Panc1 (cell line): ENCODE measurements at regions of chr10 and their contacts with region 1.

Region 1: DNA sequence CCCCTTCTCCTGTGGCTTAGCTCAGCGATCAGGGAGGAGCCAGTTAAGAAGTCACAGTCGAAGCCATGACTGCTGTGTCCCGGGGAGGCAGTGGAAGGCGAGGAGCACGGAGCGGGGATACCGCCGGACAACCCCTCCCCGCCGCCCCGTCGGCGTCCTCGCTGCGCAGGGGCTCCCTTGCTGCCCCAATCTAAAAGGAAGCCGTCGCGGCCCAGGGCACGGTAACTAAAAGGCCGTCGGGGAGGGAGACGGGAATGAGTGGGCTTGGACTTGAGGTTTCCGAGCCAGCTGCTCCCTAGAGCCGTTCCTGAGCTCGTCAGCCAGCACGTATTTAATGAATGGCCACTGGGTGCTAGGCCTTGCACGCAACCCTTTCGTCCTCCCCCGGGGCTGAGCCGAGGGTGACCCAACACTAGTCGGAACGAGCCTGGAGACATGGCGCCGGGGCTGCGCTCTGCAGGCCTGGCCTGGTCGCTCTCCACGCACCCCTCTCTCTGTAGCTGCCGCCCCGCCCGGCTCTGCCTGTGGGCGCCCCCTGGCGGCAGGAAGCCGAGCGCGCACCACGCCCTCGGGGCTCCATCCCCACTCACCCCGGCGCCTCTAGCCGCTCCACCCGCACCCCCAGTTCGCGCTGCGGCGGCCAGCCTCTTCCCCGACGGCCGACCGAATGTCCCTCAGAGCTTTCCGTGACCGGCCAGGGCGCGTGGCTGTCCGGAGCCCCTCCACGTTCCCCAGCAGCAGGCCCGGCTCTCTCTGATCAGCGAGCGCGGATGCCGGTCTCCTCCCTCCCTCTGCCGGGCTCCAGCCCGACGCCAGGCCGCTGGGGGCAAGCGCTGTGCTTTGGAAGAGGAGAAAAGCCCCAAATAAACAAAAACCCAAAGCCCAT is 29.3 kb upstream of the KCNK18 start:
- DNase-seq: no peak
- ATAC-seq: peak; percentile 90
- H3K4me3 ChIP-seq: peak overlapping the region; percentile 41 to 49
- H3K27ac ChIP-seq: no peak overlapping the region
- H3K4me1 ChIP-seq: no peaks in the 10 kb centered on the region
- H3K27me3 ChIP-seq: peaks cover 38% of the 10 kb centered on the region
- CTCF ChIP-seq: peak; percentile 99

Region 2: DNA sequence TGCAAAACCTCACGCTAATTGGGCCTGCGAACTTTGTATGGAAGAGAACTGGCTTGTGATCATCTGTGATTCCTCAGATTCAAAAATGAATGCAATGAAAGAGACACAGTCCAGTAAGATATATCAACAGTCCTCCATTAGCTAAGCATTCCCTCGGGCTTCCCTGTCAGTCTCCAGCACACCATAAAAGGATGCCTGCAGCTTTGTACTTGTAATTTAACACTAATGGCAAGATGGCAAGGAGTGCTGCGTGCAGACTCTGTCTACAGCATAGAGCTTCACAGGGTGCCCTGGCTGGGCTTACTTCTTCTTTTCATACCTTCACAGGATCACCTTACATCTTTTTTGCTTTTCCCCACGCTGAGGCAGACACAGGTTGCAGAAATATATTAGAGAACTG is 1095.0 kb before region 1 on chr10:
- CTCF ChIA-PET with region 1: no interaction called
- POLR2A ChIA-PET with region 1: no interaction called
- in situ Hi-C with region 1: no loop called
- intact Hi-C with region 1: no loop called
- DNase-seq: no peak
- ATAC-seq: no peak
- H3K4me3 ChIP-seq: no peak overlapping the region
- H3K27ac ChIP-seq: no peak overlapping the region
- H3K4me1 ChIP-seq: no peaks in the 10 kb centered on the region
- H3K27me3 ChIP-seq: no peaks in the 10 kb centered on the region
- CTCF ChIP-seq: no peak

Region 3: GRCh38 chr10:116796910-116797513 is 371.0 kb before region 1 on chr10:
- CTCF ChIA-PET with region 1: interaction called, 28 read pairs
- POLR2A ChIA-PET with region 1: interaction called, 3 read pairs
- in situ Hi-C with region 1: no loop called
- intact Hi-C with region 1: no loop called
- DNase-seq: peak; percentile 38
- ATAC-seq: peak; percentile 98
- H3K4me3 ChIP-seq: no peak overlapping the region
- H3K27ac ChIP-seq: no peak overlapping the region
- H3K4me1 ChIP-seq: no peaks in the 10 kb centered on the region
- H3K27me3 ChIP-seq: no peaks in the 10 kb centered on the region; the same call in 1 of the 2 replicates
- CTCF ChIP-seq: peak; percentile 96

Region 4: DNA sequence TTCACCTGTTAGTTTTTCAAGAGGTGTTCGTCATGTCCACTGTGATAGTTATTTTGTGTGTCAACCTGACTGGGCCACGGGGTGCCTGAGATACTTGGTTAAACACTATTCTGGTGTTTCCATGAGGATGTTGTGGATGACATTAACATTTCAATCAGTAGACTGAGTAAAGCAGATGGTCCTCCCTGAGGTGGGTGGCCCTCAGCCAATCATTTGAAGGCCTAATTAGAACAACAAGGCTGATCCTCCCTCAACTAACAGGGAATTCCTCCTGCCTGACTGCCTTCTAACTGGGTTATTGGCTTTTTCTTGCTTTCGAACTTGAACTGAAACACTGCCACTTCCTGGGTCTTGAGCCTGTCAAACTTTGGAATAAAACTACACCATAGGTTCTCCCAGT is 243.0 kb before region 1 on chr10:
- CTCF ChIA-PET with region 1: no interaction called
- POLR2A ChIA-PET with region 1: no interaction called
- in situ Hi-C with region 1: no loop called
- intact Hi-C with region 1: loop called (anchors 10 kb)
- DNase-seq: no peak
- ATAC-seq: no peak
- H3K4me3 ChIP-seq: no peak overlapping the region
- H3K27ac ChIP-seq: no peak overlapping the region
- H3K4me1 ChIP-seq: no peaks in the 10 kb centered on the region
- H3K27me3 ChIP-seq: no peaks in the 10 kb centered on the region
- CTCF ChIP-seq: no peak

Region 5: GRCh38 chr10:117005027-117005526 is 163.0 kb before region 1 on chr10 and contains the start of gene SHTN1:
- CTCF ChIA-PET with region 1: no interaction called
- POLR2A ChIA-PET with region 1: no interaction called
- in situ Hi-C with region 1: no loop called
- intact Hi-C with region 1: loop called (anchors 5 kb)
- DNase-seq: peak; percentile 51
- ATAC-seq: peak; percentile 92
- H3K4me3 ChIP-seq: peak within 1 kb of the TSS; percentile 75 to 84
- H3K27ac ChIP-seq: peak within 1 kb of the TSS; percentile 96
- H3K4me1 ChIP-seq: peaks cover 29% of the 10 kb centered on the region
- H3K27me3 ChIP-seq: no peaks in the 10 kb centered on the region
- CTCF ChIP-seq: no peak
- total RNA-seq, gene SHTN1: 67.8 TPM

Region 6: DNA sequence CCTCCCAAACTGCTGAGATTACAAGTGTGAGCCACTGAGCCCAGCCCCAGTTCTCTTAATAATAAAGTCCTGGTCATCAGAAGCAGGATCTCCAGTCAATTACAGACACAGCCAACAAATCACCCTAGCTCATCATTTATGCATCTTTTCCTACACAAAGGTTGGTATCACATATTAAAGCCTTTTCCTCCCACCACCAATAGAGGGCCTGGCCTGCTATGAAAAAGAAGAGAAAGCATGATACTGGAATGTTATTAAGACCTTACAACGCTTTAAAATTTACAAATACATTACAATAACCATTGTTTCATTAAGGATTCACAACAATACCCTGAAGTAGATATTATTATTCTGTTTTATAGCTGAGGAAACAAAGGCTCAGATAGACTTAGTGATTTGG is 55.8 kb before region 1 on chr10:
- CTCF ChIA-PET with region 1: interaction called, 6 read pairs
- POLR2A ChIA-PET with region 1: no interaction called
- in situ Hi-C with region 1: no loop called
- intact Hi-C with region 1: loop called (anchors 2 kb)
- DNase-seq: no peak
- ATAC-seq: peak; percentile 70; the same call in 1 of the 2 replicates
- H3K4me3 ChIP-seq: no peak overlapping the region
- H3K27ac ChIP-seq: no peak overlapping the region
- H3K4me1 ChIP-seq: no peaks in the 10 kb centered on the region
- H3K27me3 ChIP-seq: peaks cover 8% of the 10 kb centered on the region; the same call in 1 of the 2 replicates
- CTCF ChIP-seq: peak; percentile 81

Region 7: GRCh38 chr10:117216611-117217195 is 48.7 kb after region 1 on chr10:
- CTCF ChIA-PET with region 1: no interaction called
- POLR2A ChIA-PET with region 1: no interaction called
- in situ Hi-C with region 1: no loop called
- intact Hi-C with region 1: no loop called
- DNase-seq: peak; percentile 51
- ATAC-seq: peak; percentile 89
- H3K4me3 ChIP-seq: peak overlapping the region; percentile 53 to 67
- H3K27ac ChIP-seq: no peak overlapping the region
- H3K4me1 ChIP-seq: peaks cover 8% of the 10 kb centered on the region
- H3K27me3 ChIP-seq: peaks cover 34% of the 10 kb centered on the region
- CTCF ChIP-seq: peak; percentile 100